ENCODE measurements at regions of chr12 and their contacts with region 1.

Region 1: GRCh38 chr12:66301944-66302826 is at the start of gene HELB:
- DNase-seq: peak; percentile 99
- ATAC-seq: peak; percentile 95
- H3K4me3 ChIP-seq: peak within 1 kb of the TSS; percentile 81 to 86
- H3K27ac ChIP-seq: peak within 1 kb of the TSS; percentile 54
- H3K4me1 ChIP-seq: peaks cover 8 to 11% of the 10 kb centered on the region in 2 experiments; a peak in 3 of 4 replicates
- H3K27me3 ChIP-seq: no peaks in the 10 kb centered on the region
- CTCF ChIP-seq: no peak
- POLR2A ChIP-seq: peak; percentile 53
- RAD21 ChIP-seq: no peak
- total RNA-seq, gene HELB: 9.3 TPM

Region 2: DNA sequence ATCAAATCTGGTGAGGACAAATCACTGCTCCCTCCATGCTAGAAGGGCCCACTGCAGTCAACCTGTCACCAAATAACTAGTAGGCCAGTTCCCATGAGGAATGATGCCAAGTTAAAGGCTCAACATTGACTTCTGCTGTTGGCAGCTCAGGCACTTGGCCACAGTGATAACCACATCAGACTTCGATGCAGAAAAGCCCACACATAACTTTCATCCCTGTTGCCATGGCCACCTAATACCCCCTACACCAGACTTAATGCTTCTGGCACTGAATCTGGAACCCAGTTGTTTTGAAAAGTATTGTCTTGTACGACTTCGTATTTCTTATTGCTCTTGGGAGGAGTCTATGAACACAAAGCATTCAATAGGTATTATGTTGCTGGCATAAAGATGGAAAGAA is 44.2 kb before region 1 on chr12:
- CTCF ChIA-PET with region 1: no interaction called
- POLR2A ChIA-PET with region 1: interaction called, 11 read pairs
- RAD21 ChIA-PET with region 1: no interaction called
- intact Hi-C with region 1: no loop called
- DNase-seq: no peak
- ATAC-seq: no peak
- H3K4me3 ChIP-seq: no peak overlapping the region
- H3K27ac ChIP-seq: no peak overlapping the region
- H3K4me1 ChIP-seq: no peaks in the 10 kb centered on the region
- H3K27me3 ChIP-seq: peaks cover 26% of the 10 kb centered on the region
- CTCF ChIP-seq: no peak
- POLR2A ChIP-seq: no peak
- RAD21 ChIP-seq: no peak

Measured in HCT116 (cell line).